ENCODE measurements at regions of chr14 and their contacts with region 1.

Region 1: GRCh38 chr14:95431199-95432143 is 85.0 kb downstream of the SYNE3 start:
- DNase-seq: no peak
- H3K4me3 ChIP-seq: no peak overlapping the region
- H3K27me3 ChIP-seq: no peaks in the 10 kb centered on the region
- CTCF ChIP-seq: peak; percentile 40

Region 2: DNA sequence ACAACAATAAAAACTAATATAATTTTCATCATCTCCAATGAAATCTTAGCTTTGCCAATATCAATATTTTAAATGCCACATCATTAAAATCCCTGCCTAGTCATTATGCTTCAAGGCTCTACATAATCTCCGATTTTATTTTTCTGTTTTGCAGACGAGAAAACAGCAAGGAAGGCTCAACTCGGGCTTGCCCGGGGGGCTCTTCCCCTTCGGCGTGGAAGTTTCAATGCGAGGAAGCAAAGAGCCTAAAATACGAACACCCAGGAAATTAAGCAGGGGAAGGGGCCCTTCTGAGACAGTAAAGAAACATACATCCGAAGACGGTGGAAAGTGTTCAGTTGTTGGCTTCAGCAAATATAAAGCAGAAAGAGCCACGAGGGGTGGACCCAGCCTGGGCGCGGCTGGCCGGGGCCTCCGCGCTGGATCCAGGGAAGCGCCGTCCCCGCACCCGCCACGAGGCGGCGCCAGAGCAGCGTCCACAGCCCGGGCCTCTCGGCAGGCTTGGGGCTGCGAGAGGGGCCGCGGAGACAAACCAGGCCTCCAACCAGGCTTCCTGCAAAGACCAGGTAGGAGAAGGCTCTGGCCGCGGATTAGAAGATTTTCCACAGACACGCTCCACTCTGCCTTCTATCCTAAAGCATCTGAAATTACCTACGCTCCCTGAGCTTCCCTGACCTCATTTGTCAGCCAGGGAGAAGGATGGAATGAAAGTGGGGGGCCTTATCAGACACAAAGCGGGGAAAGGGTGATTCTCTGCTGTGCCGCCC is 742.1 kb before region 1 on chr14:
- CTCF ChIA-PET with region 1: interaction called, 18 read pairs
- POLR2A ChIA-PET with region 1: no interaction called
- DNase-seq: no peak
- H3K4me3 ChIP-seq: no peak overlapping the region
- H3K27me3 ChIP-seq: no peaks in the 10 kb centered on the region
- CTCF ChIP-seq: peak; percentile 83